ENCODE measurements at regions of chr18 and their contacts with region 1.

Region 1: GRCh38 chr18:49510393-49511115 is 23.5 kb upstream of the C18orf32 start:
- DNase-seq: peak; percentile 24 to 27
- ATAC-seq: peak in 7 of 8 donors; percentile 40 to 75 (median 51)
- H3K4me3 ChIP-seq: no peak overlapping the region
- H3K27ac ChIP-seq: no peak overlapping the region
- H3K4me1 ChIP-seq: no peaks in the 10 kb centered on the region
- H3K27me3 ChIP-seq: peaks cover 0 to 20% (median 0%) of the 10 kb centered on the region in 7 donors
- CTCF ChIP-seq: peak; percentile 42 to 88 (median 83)

Region 2: GRCh38 chr18:47601581-47602272 is 1908.8 kb before region 1 on chr18:
- intact Hi-C with region 1: no loop called
- DNase-seq: no peak
- ATAC-seq: no peak
- H3K4me3 ChIP-seq: no peak overlapping the region
- H3K27ac ChIP-seq: no peak overlapping the region
- H3K4me1 ChIP-seq: no peaks in the 10 kb centered on the region
- H3K27me3 ChIP-seq: peaks cover 0 to 13% (median 6%) of the 10 kb centered on the region in 7 donors
- CTCF ChIP-seq: no peak

Region 3: DNA sequence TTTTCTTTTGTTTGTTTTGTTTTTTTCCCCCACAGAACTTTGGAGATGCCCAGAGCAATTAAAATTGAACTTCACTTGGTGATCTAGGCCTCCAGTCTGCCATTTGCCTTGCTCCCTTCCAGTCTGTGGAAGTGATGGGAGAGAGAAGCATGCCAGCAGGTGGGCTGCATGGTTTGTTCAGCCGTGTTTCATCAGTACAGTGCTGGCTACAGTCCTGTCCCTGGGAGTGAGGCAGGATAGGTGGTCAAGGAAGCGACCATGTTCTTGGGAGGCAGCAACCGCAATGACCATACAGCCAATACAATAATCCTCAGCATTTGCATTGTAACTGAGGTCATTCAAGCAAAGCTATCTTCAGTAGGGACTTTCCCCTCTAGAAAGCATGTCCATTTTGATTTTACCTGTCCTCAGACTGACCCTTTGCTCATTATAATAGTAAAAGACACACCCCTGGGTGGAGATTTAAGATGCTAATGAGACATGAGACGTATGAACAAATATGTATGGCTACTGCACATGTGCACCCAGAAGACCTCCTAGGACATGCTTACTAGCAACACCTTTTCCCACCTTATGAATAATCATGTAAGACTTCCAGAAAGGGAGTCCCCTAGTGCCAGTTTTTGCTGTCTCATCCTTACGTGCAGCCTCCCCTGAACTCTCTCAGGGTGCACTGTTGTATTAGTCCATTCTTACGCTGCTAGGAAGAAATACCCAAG is 40.2 kb after region 1 on chr18:
- intact Hi-C with region 1: loop called in 1 of 10 experiments (anchors 5 kb)
- DNase-seq: no peak
- ATAC-seq: no peak
- H3K4me3 ChIP-seq: no peak overlapping the region
- H3K27ac ChIP-seq: no peak overlapping the region
- H3K4me1 ChIP-seq: no peaks in the 10 kb centered on the region
- H3K27me3 ChIP-seq: peaks cover 0 to 29% (median 3%) of the 10 kb centered on the region in 7 donors
- CTCF ChIP-seq: no peak

Region 4: DNA sequence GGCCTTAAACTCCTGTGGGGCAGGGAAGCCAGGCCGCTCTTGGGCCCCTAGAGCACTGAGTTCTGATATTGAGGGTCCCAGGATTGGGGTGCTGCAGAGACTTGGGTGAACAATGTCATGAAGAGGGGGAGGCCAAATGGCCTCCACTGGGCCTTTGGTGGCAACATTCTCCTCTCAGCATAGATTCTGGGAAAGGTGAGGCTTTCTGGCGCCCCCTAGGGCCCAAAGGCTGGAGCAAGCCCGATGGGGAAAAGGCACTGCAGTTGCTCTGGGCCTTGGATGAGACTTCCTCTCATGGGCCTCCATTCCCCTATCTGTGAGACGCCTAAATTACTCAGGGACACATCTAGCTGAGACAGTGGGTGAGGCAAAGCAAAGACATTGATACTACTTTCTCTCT is 218.0 kb after region 1 on chr18:
- intact Hi-C with region 1: loop called in 1 of 10 experiments (anchors 2 kb)
- DNase-seq: peak; percentile 16 to 45
- ATAC-seq: no peak
- H3K4me3 ChIP-seq: no peak overlapping the region
- H3K27ac ChIP-seq: peak overlapping the region in 2 of 10 donors; percentile 58 to 65
- H3K4me1 ChIP-seq: peaks cover 0 to 31% (median 8%) of the 10 kb centered on the region in 9 donors
- H3K27me3 ChIP-seq: peaks cover 0 to 6% (median 0%) of the 10 kb centered on the region in 7 donors
- CTCF ChIP-seq: peak; percentile 13 to 71 (median 51)

Region 5: DNA sequence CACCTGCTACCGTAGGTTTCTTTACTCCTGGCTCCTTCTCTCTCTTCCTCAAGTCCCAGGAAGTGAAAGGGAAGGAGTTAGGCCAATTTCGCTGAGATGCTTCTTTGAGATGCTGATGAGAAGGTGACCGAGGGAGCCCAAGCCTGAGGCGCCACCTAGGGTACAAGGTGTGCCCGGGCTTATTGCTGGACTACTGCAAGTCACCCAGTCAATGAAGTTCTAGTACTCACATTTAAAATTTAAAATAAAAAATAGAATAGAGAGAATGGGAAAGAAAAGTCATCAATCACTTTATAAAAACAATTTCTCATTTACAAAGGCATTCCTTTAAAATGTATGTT is 257.5 kb after region 1 on chr18:
- intact Hi-C with region 1: loop called in 4 of 10 experiments (anchors 5 to 10 kb)
- DNase-seq: peak; percentile 27 to 32
- ATAC-seq: peak in 7 of 8 donors; percentile 42 to 75 (median 59)
- H3K4me3 ChIP-seq: no peak overlapping the region
- H3K27ac ChIP-seq: no peak overlapping the region
- H3K4me1 ChIP-seq: no peaks in the 10 kb centered on the region
- H3K27me3 ChIP-seq: no peaks in the 10 kb centered on the region
- CTCF ChIP-seq: peak in 8 of 9 donors; percentile 23 to 71 (median 53)

Region 6: GRCh38 chr18:49858309-49859020 is 347.9 kb after region 1 on chr18:
- intact Hi-C with region 1: loop called (anchors 1 to 5 kb)
- DNase-seq: peak; percentile 44 to 58
- ATAC-seq: peak in 7 of 8 donors; percentile 40 to 73 (median 63)
- H3K4me3 ChIP-seq: no peak overlapping the region
- H3K27ac ChIP-seq: no peak overlapping the region
- H3K4me1 ChIP-seq: peaks cover 0 to 3% (median 0%) of the 10 kb centered on the region in 9 donors
- H3K27me3 ChIP-seq: peaks cover 0 to under 1% (median 0%) of the 10 kb centered on the region in 7 donors
- CTCF ChIP-seq: peak; percentile 83 to 97 (median 91)

Region 7: GRCh38 chr18:50194631-50195532 is 684.3 kb after region 1 on chr18 and contains the start of gene MYO5B:
- intact Hi-C with region 1: loop called in 1 of 10 experiments (anchors 10 kb)
- DNase-seq: peak in 1 of 2 donors; percentile 25
- ATAC-seq: peak; percentile 46 to 90 (median 64)
- H3K4me3 ChIP-seq: peak within 1 kb of the TSS; percentile 21 to 60 (median 53)
- H3K27ac ChIP-seq: no peak within 1 kb of the TSS
- H3K4me1 ChIP-seq: peaks cover 0 to 13% (median 11%) of the 10 kb centered on the region in 9 donors
- H3K27me3 ChIP-seq: peaks cover 16 to 92% (median 79%) of the 10 kb centered on the region in 7 donors
- CTCF ChIP-seq: peak in 8 of 9 donors; percentile 7 to 56 (median 30)
- total RNA-seq, gene MYO5B: 0.20 to 3.7 (median 1.3) TPM

Measured in heart right ventricle (tissue), 16 donors.